ENCODE measurements at regions of chr22 and their contacts with region 1.

Region 1: GRCh38 chr22:24423519-24424000 is 3.8 kb upstream of the ADORA2A start:
- DNase-seq: peak; percentile 60 to 75
- ATAC-seq: peak; percentile 37 to 79 (median 55)
- H3K4me3 ChIP-seq: peak overlapping the region; percentile 61 to 90 (median 76)
- H3K27ac ChIP-seq: peak overlapping the region in 9 of 10 donors; percentile 63 to 89 (median 73)
- H3K4me1 ChIP-seq: peaks cover 19 to 89% (median 55%) of the 10 kb centered on the region in 9 donors
- H3K27me3 ChIP-seq: peaks cover 0 to 10% (median 0%) of the 10 kb centered on the region in 7 donors
- CTCF ChIP-seq: peak; percentile 82 to 99 (median 92)

Region 2: DNA sequence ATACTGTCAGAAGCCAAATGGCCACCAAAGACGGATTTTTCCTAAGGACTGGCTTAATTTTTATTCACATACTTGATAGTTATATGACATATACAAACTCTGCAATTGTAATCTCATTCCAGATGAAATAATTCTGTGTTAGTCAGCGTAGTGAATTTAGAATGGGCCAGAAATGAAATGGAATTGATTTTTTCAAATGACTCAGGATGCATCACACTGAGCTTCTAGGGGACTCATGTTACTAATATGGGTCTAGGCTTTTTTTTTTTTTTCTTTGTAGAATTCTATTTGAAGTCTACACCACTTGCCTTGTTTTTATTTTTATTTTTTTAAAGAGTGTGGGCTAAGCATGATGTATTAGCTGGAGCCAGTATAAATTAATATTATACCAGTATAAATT is 90.3 kb before region 1 on chr22:
- intact Hi-C with region 1: loop called in 4 of 10 experiments (anchors 5 kb)
- DNase-seq: no peak
- ATAC-seq: no peak
- H3K4me3 ChIP-seq: no peak overlapping the region
- H3K27ac ChIP-seq: no peak overlapping the region
- H3K4me1 ChIP-seq: peaks cover 0 to 43% (median 4%) of the 10 kb centered on the region in 9 donors
- H3K27me3 ChIP-seq: no peaks in the 10 kb centered on the region
- CTCF ChIP-seq: no peak

Region 3: GRCh38 chr22:24482575-24482974 is 59.0 kb after region 1 on chr22:
- intact Hi-C with region 1: loop called in 2 of 10 experiments (anchors 5 to 10 kb)
- DNase-seq: no peak
- ATAC-seq: peak in 1 of 8 donors; percentile 56
- H3K4me3 ChIP-seq: no peak overlapping the region
- H3K27ac ChIP-seq: peak overlapping the region in 1 of 10 donors; percentile 64
- H3K4me1 ChIP-seq: peaks cover 0 to 53% (median 13%) of the 10 kb centered on the region in 9 donors
- H3K27me3 ChIP-seq: no peaks in the 10 kb centered on the region
- CTCF ChIP-seq: no peak

Region 4: GRCh38 chr22:24503137-24503842 is 79.7 kb after region 1 on chr22:
- intact Hi-C with region 1: loop called in 8 of 10 experiments (anchors 5 kb)
- DNase-seq: peak; percentile 65 to 68
- ATAC-seq: peak; percentile 63 to 86 (median 74)
- H3K4me3 ChIP-seq: no peak overlapping the region
- H3K27ac ChIP-seq: peak overlapping the region in 1 of 10 donors; percentile 48
- H3K4me1 ChIP-seq: peaks cover 0 to 47% (median 13%) of the 10 kb centered on the region in 9 donors
- H3K27me3 ChIP-seq: no peaks in the 10 kb centered on the region
- CTCF ChIP-seq: peak; percentile 38 to 78 (median 69)

Region 5: GRCh38 chr22:24516301-24516737 is 92.8 kb after region 1 on chr22:
- intact Hi-C with region 1: loop called in 3 of 10 experiments (anchors 5 kb)
- DNase-seq: no peak
- ATAC-seq: no peak
- H3K4me3 ChIP-seq: no peak overlapping the region
- H3K27ac ChIP-seq: no peak overlapping the region
- H3K4me1 ChIP-seq: peaks cover 0 to 34% (median 16%) of the 10 kb centered on the region in 9 donors
- H3K27me3 ChIP-seq: no peaks in the 10 kb centered on the region
- CTCF ChIP-seq: no peak

Region 6: DNA sequence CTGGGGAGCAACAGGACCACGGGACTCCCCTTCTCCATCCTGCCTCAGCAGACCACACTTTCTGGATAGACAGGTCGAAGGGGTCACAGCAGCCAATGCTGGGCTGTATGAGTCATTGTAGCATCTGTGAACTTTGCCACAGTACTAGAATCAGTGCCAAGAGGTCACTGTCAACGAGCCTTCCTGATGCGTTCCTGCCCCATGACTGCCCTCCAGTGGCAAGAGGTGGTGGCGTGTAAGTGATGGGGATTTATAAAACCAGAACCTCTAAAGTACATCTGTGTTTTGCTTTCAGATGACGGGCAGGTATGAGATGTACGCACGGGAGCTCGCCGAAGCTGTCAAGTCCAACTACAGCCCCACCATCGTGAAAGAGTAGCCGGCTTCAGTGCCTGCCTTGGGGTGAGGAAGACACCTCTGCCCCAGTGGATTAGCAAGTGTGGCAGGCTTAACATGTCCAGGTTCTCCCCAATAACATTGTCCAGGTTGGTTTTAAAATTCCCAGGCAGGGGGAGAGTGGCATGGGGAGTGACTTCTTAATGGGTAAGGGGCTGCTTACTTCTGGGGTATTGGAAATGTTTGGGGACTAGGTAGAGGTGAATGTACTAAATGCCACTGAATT is 102.0 kb after region 1 on chr22:
- intact Hi-C with region 1: loop called in 5 of 10 experiments (anchors 5 kb)
- DNase-seq: peak; percentile 75 to 76
- ATAC-seq: peak; percentile 71 to 87 (median 79)
- H3K4me3 ChIP-seq: no peak overlapping the region
- H3K27ac ChIP-seq: no peak overlapping the region
- H3K4me1 ChIP-seq: peaks cover 3 to 24% (median 16%) of the 10 kb centered on the region in 9 donors
- H3K27me3 ChIP-seq: no peaks in the 10 kb centered on the region
- CTCF ChIP-seq: peak; percentile 76 to 89 (median 87)

Region 7: DNA sequence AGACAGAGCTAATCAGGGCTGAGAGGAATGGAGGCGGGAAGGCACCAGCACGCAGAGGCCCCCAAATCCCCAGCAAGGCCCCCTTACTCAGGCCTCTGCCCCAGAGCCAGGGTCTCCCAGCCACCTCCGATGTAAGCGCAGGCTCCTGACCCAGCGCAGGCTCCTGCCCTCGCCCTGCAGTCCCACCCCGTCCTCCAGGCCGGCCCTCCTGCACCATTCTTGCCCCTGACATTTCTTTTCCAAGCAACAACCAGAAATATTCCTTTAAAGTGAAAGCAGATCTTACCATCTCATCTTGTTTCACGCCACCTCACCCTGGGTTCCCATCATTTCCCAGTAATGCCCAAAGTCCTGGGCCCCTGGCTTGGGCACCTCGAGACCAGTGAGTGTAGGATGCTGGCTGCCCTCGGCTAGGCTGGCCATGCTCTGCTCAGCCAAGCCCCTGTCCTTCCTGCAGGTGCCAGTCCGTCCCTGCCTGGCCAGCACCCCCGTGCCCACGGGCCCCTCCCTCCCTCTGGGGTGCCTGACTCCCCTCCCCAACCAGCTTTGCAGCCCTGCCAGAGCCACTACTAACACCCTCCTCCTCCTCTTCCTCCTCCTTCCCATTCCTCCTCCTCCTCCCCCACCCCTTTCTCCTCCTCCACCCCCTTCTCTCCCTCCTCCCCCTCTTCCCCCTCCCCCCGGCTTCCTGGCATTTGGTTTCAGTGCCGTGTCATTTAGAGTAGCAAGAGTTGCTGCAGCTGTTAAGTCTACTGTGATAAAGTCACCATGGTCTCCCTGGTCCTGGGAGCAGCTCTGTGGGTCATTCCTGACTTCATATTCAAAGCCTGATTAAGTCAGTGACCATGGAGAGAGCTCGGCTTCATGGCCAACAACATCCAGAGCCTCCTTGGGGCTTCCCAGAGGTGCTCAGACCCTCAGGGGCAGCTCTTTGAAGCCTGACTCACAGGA is 272.3 kb after region 1 on chr22:
- intact Hi-C with region 1: no loop called
- DNase-seq: peak; percentile 29 to 43
- ATAC-seq: peak; percentile 26 to 72 (median 56)
- H3K4me3 ChIP-seq: no peak overlapping the region
- H3K27ac ChIP-seq: peak overlapping the region in 6 of 10 donors; percentile 8 to 64 (median 49)
- H3K4me1 ChIP-seq: peaks cover 2 to 27% (median 17%) of the 10 kb centered on the region in 9 donors
- H3K27me3 ChIP-seq: no peaks in the 10 kb centered on the region
- CTCF ChIP-seq: no peak

Measured in heart right ventricle (tissue), 16 donors.